ENCODE measurements at regions of chr2 and their contacts with region 1.

Region 1: DNA sequence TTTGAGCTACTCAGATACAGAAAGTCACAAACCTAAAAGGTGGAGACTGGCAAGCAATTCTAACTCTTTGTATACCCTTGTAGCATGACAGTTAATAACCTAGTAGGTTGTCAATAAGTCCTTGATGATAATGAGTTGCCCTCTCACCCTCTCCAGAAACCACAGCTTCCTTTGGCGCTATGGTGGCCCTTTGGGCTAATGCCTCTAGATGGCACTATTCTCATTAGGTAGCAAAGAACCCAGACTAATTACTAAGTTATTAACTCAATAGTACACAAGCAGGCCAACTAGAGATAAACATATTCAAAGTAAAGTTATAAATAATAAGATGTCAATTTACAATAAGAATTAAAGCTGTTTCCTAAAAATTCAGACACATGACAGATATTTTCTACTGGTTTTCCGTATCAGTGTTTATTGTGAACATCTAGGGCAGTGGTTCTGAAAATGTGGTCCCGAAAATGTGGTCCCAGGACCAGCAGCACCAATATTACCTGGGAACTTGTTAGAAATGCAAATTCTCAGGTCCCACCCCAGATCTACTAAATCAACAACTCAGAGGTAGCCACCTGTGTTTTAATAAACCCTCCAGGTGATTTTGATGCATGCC is 41.1 kb downstream of the LDAH start:
- DNase-seq: peak in 5 of 35 experiments; percentile 0 to 34 (median 5)
- ATAC-seq: peak in 2 of 4 experiments; percentile 27 to 56
- H3K4me3 ChIP-seq: no peak overlapping the region
- H3K4me3 Mint-ChIP-seq: no peak overlapping the region
- H3K27ac ChIP-seq: no peak overlapping the region
- H3K27ac Mint-ChIP-seq: no peak overlapping the region
- H3K4me1 ChIP-seq: no peaks in the 10 kb centered on the region
- H3K4me1 Mint-ChIP-seq: peaks cover 0 to 10% (median 0%) of the 10 kb centered on the region in 3 donors
- H3K27me3 ChIP-seq: no peaks in the 10 kb centered on the region
- H3K27me3 Mint-ChIP-seq: no peaks in the 10 kb centered on the region

Region 2: DNA sequence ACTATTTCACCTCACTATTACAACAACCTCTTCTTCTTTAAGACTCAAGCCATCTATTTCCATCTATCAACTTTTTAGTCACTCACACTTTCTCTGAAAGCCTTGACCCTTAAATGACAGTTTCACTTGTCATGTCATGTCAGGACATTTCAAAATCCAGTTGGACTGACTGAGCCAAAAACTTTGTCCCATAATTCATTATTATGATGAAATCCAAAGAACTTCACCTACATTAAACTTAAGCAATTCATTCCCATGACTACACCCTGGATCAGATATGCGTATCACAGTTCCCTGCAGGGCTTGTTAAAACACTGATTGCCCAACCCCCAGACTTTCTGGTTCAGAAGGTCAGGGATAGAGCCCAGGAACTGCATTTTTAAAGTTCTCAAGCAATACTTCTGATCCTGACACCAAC is 14.6 kb after region 1 on chr2:
- CTCF ChIA-PET with region 1: no interaction called
- POLR2A ChIA-PET with region 1: no interaction called
- DNase-seq: no peak
- ATAC-seq: no peak
- H3K4me3 ChIP-seq: no peak overlapping the region
- H3K4me3 Mint-ChIP-seq: no peak overlapping the region
- H3K27ac ChIP-seq: no peak overlapping the region
- H3K27ac Mint-ChIP-seq: no peak overlapping the region
- H3K4me1 ChIP-seq: no peaks in the 10 kb centered on the region
- H3K4me1 Mint-ChIP-seq: peaks cover 13 to 35% (median 17%) of the 10 kb centered on the region in 3 donors
- H3K27me3 ChIP-seq: no peaks in the 10 kb centered on the region
- H3K27me3 Mint-ChIP-seq: no peaks in the 10 kb centered on the region

Region 3: GRCh38 chr2:20962939-20963557 is 181.3 kb after region 1 on chr2:
- CTCF ChIA-PET with region 1: interaction called, 14 to 24 read pairs
- POLR2A ChIA-PET with region 1: no interaction called
- DNase-seq: peak; percentile 5 to 78 (median 52)
- ATAC-seq: peak; percentile 36 to 67 (median 52)
- H3K4me3 ChIP-seq: no peak overlapping the region
- H3K4me3 Mint-ChIP-seq: no peak overlapping the region
- H3K27ac ChIP-seq: no peak overlapping the region
- H3K27ac Mint-ChIP-seq: no peak overlapping the region
- H3K4me1 ChIP-seq: no peaks in the 10 kb centered on the region
- H3K4me1 Mint-ChIP-seq: no peaks in the 10 kb centered on the region
- H3K27me3 ChIP-seq: peaks cover 0 to 15% of the 10 kb centered on the region in 2 experiments
- H3K27me3 Mint-ChIP-seq: peaks cover 24 to 28% of the 10 kb centered on the region in 2 donors